ENCODE measurements at regions of chrX and their contacts with region 1.

Region 1: GRCh38 chrX:68146054-68146453 is 287.2 kb downstream of the OPHN1 start:
- DNase-seq: peak; percentile 4
- H3K4me3 ChIP-seq: no peak overlapping the region
- H3K27ac ChIP-seq: no peak overlapping the region
- H3K27me3 ChIP-seq: no peaks in the 10 kb centered on the region
- CTCF ChIP-seq: peak; percentile 50

Region 2: GRCh38 chrX:67555578-67556203 is 590.4 kb before region 1 on chrX:
- CTCF ChIA-PET with region 1: interaction called, 14 read pairs
- POLR2A ChIA-PET with region 1: no interaction called
- DNase-seq: no peak
- H3K4me3 ChIP-seq: no peak overlapping the region
- H3K27ac ChIP-seq: no peak overlapping the region
- H3K27me3 ChIP-seq: no peaks in the 10 kb centered on the region
- CTCF ChIP-seq: peak; percentile 64

Region 3: GRCh38 chrX:68018681-68019111 is 127.4 kb before region 1 on chrX:
- CTCF ChIA-PET with region 1: interaction called, 59 read pairs
- POLR2A ChIA-PET with region 1: no interaction called
- DNase-seq: no peak
- H3K4me3 ChIP-seq: no peak overlapping the region
- H3K27ac ChIP-seq: no peak overlapping the region
- H3K27me3 ChIP-seq: no peaks in the 10 kb centered on the region
- CTCF ChIP-seq: peak; percentile 65